ENCODE measurements at regions of chr3 and their contacts with region 1.

Region 1: GRCh38 chr3:123305192-123305591 is 103.4 kb downstream of the SEC22A start:
- DNase-seq: no peak
- H3K27ac ChIP-seq: no peak overlapping the region
- CTCF ChIP-seq: no peak

Region 2: DNA sequence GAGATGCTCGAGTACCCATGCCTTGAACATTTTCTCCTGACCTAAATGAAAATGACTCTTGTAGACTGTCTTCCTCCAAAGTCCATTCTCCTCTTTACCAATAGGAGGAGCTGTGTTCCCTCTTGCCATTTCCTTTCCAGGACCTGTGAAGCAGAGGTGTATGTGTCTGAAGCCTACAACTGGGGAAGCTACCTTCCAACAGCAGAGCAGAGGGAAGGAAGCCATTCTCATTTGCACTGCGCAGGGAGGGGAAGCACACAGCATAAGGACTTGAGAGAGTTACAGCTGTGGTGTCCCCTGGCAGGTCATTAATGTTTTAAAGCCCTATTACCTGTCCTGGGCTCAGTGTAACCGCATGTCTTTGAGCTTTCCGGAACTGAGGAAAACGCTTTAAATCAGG is 550.3 kb before region 1 on chr3:
- CTCF ChIA-PET with region 1: no interaction called
- POLR2A ChIA-PET with region 1: no interaction called
- DNase-seq: peak; percentile 21
- H3K27ac ChIP-seq: no peak overlapping the region
- CTCF ChIP-seq: peak; percentile 25; the same call in 1 of the 2 replicates

Region 3: DNA sequence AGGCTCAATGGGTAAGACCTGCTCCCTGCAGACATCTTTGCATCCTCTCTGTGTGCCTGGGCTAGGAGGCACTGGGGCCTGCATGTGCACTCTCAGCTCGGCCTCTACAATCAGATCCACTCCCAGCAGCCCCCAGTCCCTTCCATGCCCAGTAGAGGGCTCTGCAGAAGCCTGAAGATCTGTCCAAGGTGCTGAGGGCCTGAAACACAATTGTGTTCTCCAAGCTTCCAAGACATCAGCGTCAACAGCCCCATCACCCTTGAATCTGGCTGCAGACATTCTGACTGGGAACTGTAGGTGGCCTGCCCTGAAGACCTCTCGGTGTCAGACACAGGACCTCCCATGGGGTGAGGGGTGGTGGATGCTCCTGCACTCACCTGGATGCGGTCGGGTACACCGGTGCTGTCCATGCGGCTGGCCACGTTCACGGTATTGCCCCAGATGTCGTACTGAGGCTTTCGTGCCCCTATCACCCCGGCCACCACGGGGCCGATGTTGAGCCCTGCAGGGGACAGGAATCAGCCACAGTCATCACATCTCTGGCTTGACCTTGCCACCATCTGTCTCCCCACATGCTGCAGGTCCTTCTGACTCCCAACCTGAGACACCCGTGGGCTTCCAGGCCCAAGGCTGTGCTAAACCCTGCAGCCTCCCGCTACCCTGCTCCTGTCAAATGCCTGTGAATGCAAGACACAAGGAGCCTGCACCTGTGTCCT is 18.7 kb before region 1 on chr3:
- CTCF ChIA-PET with region 1: interaction called, 14 read pairs
- POLR2A ChIA-PET with region 1: no interaction called
- DNase-seq: peak; percentile 69
- H3K27ac ChIP-seq: no peak overlapping the region
- CTCF ChIP-seq: peak; percentile 58

Region 4: DNA sequence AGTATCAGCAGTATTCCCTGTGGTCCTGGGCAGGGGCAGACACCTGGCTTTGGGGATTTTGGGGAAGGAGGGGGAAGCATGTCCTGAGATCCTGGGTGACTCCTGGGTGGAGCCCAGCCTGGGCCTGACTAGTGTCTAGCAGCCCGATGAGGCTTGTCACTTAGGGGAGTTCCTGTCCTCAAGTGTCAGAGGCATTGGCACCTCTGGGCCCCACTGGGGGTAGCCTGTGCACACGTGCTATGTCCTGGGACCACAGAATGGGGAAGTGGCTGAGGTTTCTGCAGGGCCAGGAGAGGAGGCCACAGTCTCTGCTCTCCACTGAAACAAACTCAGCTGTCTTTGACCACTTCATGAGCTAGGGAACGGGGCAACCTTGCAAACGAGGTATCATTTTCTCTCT is 175.2 kb after region 1 on chr3:
- CTCF ChIA-PET with region 1: no interaction called
- POLR2A ChIA-PET with region 1: no interaction called
- DNase-seq: no peak
- H3K27ac ChIP-seq: no peak overlapping the region
- CTCF ChIP-seq: no peak